Activated CD4-positive, alpha-beta T cell treated with anti-CD3 and anti-CD28 coated beads for 36 hours (primary cell): ENCODE measurements at regions of chr2 and their contacts with region 1.

Region 1: DNA sequence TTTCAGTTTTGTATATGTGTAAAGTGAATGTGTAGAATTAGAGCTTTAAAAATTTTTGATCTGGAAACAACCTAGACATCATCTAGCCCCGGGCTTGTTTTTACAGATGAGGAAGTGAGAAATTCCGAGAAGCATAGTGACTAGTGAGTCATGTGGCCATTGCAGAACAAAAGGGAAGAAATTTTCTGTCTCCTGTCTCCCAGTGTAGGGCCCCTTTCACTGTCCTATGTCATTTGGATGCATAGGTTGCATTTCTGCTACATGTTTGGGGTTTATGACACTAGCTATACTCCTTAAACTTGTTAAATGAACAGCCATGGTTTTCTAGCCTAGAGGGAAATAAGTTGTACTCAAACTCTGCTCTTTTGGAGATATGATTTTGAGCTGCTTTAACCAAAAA is 84.6 kb downstream of the PLCL1 start:
- DNase-seq: peak; percentile 58
- ATAC-seq: peak; percentile 87
- H3K4me3 Mint-ChIP-seq: peak overlapping the region; percentile 38
- H3K27ac Mint-ChIP-seq: peak overlapping the region; percentile 89
- H3K4me1 Mint-ChIP-seq: peaks cover 57% of the 10 kb centered on the region
- H3K27me3 Mint-ChIP-seq: no peaks in the 10 kb centered on the region

Region 2: GRCh38 chr2:197538412-197538811 is 350.6 kb before region 1 on chr2:
- CTCF ChIA-PET with region 1: no interaction called
- POLR2A ChIA-PET with region 1: no interaction called
- intact Hi-C with region 1: no loop called
- DNase-seq: no peak
- ATAC-seq: no peak
- H3K4me3 Mint-ChIP-seq: no peak overlapping the region
- H3K27ac Mint-ChIP-seq: no peak overlapping the region
- H3K4me1 Mint-ChIP-seq: peaks cover 35% of the 10 kb centered on the region
- H3K27me3 Mint-ChIP-seq: no peaks in the 10 kb centered on the region

Region 3: DNA sequence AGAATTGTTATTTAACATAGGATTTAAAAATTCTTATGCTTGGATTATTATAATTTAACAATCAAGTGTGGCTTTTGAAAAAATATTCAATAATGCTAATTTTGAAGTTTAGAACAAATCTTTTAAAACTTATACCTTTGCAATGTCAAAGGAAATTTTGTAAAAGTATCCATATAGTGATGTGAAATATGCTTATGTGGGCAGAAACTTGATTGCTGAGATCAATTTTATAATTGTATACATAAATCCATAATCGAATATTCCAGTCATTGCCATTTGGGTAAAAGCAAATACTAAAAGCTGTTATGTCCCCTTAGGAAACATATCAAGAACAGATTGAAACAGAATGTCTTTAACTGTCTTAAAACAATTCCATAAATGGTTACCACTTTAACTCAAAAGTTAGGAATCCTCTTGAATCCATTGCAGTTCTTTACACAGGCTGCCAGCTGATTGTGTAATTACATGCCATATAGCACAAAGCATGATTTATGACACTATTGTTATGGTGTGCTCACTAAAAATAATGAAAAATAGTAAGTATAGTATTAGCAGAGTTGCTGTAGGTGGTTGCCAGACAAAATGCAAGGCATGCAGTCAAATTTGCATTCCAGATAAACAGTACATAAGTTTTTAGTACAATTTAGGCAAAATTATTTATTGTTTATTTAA is 60.4 kb before region 1 on chr2:
- CTCF ChIA-PET with region 1: no interaction called
- POLR2A ChIA-PET with region 1: no interaction called
- intact Hi-C with region 1: no loop called
- DNase-seq: no peak
- ATAC-seq: no peak
- H3K4me3 Mint-ChIP-seq: no peak overlapping the region
- H3K27ac Mint-ChIP-seq: no peak overlapping the region
- H3K4me1 Mint-ChIP-seq: peaks cover 8% of the 10 kb centered on the region
- H3K27me3 Mint-ChIP-seq: no peaks in the 10 kb centered on the region

Region 4: GRCh38 chr2:197869501-197870111 is 19.4 kb before region 1 on chr2:
- CTCF ChIA-PET with region 1: interaction called, 5 read pairs
- POLR2A ChIA-PET with region 1: interaction called, 3 read pairs
- intact Hi-C with region 1: loop called in 1 of 2 experiments (anchors 1 kb)
- DNase-seq: peak; percentile 33
- ATAC-seq: peak; percentile 65
- H3K4me3 Mint-ChIP-seq: peak overlapping the region; percentile 72
- H3K27ac Mint-ChIP-seq: peak overlapping the region; percentile 94
- H3K4me1 Mint-ChIP-seq: peaks cover 70% of the 10 kb centered on the region
- H3K27me3 Mint-ChIP-seq: no peaks in the 10 kb centered on the region

Region 5: DNA sequence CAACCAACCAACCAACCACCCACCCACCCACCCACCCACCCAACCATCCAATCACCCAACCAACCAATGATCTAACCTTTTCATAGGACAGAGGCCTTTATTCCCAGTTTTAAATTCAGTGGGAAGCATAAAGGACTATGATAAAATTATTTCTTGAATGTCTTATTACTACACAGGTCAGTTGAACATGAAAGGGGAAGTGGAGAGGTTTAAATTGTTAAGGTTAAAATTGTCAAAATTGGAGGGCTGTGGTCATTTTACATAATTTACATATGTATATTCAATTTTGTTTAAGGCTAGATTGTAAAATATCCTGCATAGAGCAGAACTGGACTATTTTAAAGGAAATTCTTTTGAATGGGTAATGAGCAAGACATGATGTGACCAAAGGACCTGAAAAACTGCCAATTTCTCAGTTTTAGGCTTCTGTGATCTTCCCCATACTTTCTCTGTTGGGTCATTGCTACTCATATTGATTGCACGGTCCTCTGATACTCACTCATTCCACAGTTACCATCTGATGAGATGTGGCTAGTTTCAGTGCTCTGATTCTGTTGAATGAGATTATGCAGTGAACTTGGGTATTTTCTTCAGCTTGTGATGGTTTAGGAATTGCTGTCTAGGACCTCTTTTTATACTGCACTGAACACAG is 42.7 kb after region 1 on chr2:
- CTCF ChIA-PET with region 1: interaction called, 4 read pairs
- POLR2A ChIA-PET with region 1: no interaction called
- intact Hi-C with region 1: loop called (anchors 5 kb)
- DNase-seq: no peak
- ATAC-seq: peak; percentile 65
- H3K4me3 Mint-ChIP-seq: no peak overlapping the region
- H3K27ac Mint-ChIP-seq: no peak overlapping the region
- H3K4me1 Mint-ChIP-seq: peaks cover 47% of the 10 kb centered on the region
- H3K27me3 Mint-ChIP-seq: no peaks in the 10 kb centered on the region

Region 6: DNA sequence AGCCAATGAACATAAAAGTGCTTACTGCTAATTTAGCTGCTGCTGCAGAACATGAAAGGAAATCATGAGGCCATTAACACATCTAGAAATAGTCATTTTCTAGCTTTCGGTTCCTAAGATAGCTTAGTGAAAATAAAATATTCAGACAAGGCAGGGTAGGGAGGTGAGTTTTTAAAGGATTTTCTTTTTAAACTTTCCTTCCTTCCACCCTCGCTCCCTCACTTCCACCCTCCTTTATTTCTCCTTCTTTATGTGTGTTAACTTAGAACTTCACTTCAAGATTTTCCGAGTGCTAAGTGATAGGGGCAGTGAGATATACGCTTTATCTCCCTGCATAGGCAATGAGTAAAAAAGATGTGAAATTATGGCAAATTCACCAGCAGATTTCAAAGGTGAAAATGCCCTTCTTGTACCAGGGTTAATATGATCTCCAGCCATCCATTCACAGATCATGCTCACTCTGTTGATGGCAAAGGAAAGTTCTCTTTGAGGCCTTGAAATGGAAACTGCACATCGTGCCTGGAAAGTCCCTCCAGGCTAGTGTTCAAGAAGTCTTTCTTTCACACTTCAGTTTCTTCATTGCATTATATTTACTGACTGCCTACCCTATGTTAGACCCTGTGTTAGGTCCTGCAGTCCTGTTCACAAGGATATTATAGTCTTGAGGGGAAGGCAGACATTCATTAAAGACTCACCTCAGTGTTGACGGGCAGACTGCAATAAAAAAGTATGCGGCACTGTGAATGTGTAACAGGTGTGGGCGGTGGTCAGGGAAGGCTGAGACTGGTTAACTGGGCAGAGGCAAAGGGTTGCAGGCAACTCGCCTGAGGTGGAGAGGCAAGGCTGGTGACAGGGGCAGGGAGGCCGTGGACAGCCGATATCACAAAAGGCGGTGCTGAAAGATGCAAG is 116.1 kb after region 1 on chr2:
- CTCF ChIA-PET with region 1: interaction called, 4 read pairs
- POLR2A ChIA-PET with region 1: interaction called, 5 read pairs
- intact Hi-C with region 1: loop called in 1 of 2 experiments (anchors 5 kb)
- DNase-seq: peak; percentile 71
- ATAC-seq: peak; percentile 67
- H3K4me3 Mint-ChIP-seq: peak overlapping the region; percentile 32
- H3K27ac Mint-ChIP-seq: peak overlapping the region; percentile 88
- H3K4me1 Mint-ChIP-seq: peaks cover 83% of the 10 kb centered on the region
- H3K27me3 Mint-ChIP-seq: no peaks in the 10 kb centered on the region

Region 7: GRCh38 chr2:198362740-198363139 is 473.7 kb after region 1 on chr2:
- CTCF ChIA-PET with region 1: no interaction called
- POLR2A ChIA-PET with region 1: no interaction called
- intact Hi-C with region 1: no loop called
- DNase-seq: no peak
- ATAC-seq: no peak
- H3K4me3 Mint-ChIP-seq: no peak overlapping the region
- H3K27ac Mint-ChIP-seq: no peak overlapping the region
- H3K4me1 Mint-ChIP-seq: no peaks in the 10 kb centered on the region
- H3K27me3 Mint-ChIP-seq: peaks cover 20% of the 10 kb centered on the region